ENCODE measurements at regions of chr14 and their contacts with region 1.

Region 1: GRCh38 chr14:34227834-34228649 is 234.0 kb downstream of the SPTSSA start:
- DNase-seq: peak; percentile 56 to 76
- ATAC-seq: peak; percentile 92 to 99 (median 95)
- H3K4me3 ChIP-seq: peak overlapping the region; percentile 52
- H3K27ac ChIP-seq: no peak overlapping the region
- H3K4me1 ChIP-seq: peaks cover 17% of the 10 kb centered on the region
- H3K27me3 ChIP-seq: no peaks in the 10 kb centered on the region
- CTCF ChIP-seq: peak; percentile 79

Region 2: GRCh38 chr14:33839193-33840076 is 388.6 kb before region 1 on chr14:
- intact Hi-C with region 1: loop called (anchors 2 kb)
- DNase-seq: peak; percentile 35 to 60
- ATAC-seq: peak; percentile 76 to 95 (median 85)
- H3K4me3 ChIP-seq: no peak overlapping the region
- H3K27ac ChIP-seq: no peak overlapping the region
- H3K4me1 ChIP-seq: peaks cover 9% of the 10 kb centered on the region
- H3K27me3 ChIP-seq: no peaks in the 10 kb centered on the region
- CTCF ChIP-seq: peak; percentile 91

Region 3: GRCh38 chr14:33950320-33951182 is 277.5 kb before region 1 on chr14 and contains the start of gene EGLN3:
- intact Hi-C with region 1: loop called in 1 of 2 experiments (anchors 10 kb)
- DNase-seq: peak; percentile 89 to 94
- ATAC-seq: peak; percentile 98 to 99 (median 99)
- H3K4me3 ChIP-seq: peak within 1 kb of the TSS; percentile 81
- H3K27ac ChIP-seq: peak within 1 kb of the TSS; percentile 86
- H3K4me1 ChIP-seq: peaks cover 22% of the 10 kb centered on the region
- H3K27me3 ChIP-seq: no peaks in the 10 kb centered on the region
- CTCF ChIP-seq: no peak
- total RNA-seq, gene EGLN3: 6.7 to 58.7 (median 20.6) TPM

Region 4: DNA sequence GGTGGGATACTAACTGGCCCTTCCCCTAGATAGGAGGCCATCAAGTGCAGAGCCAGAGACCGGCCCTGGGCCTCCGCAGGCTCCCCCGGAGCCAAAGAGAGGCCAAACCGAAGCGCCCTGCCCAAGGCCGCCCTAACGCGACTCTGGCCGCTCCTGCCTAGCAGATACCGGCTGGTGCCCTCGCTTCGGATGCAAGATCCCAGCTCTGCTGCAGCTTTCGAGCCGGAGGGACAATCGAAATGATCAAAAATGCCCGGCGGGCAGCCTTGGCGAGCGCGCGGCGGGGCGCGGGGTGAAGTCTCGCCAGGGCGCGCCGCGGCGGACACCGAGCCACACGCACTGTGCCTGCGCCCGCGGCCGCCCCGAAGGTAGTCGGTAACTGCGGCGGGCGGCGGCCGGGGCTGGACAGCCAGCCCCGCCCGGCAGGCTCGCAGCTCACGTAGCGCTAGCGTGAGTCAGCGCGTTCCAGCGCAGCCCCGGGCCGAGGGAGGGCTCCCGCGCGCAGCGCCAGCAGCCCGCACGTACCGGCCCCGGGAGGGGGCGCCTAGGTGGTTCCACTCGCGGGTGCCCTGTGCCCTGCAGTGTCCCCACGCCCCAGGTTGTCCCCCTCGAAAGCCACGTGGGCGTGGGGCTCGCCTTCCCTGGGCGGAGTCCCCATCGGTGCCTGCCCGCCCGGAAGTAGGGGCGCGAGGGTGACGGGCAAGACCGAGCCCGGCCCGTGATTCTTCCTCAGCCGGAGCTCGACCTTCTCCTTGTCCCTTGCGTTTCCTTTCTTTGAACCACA is 168.0 kb before region 1 on chr14:
- intact Hi-C with region 1: loop called in 1 of 2 experiments (anchors 10 kb)
- DNase-seq: peak; percentile 86 to 93
- ATAC-seq: peak; percentile 91 to 95 (median 92)
- H3K4me3 ChIP-seq: peak overlapping the region; percentile 82
- H3K27ac ChIP-seq: peak overlapping the region; percentile 99
- H3K4me1 ChIP-seq: peaks cover 31% of the 10 kb centered on the region
- H3K27me3 ChIP-seq: no peaks in the 10 kb centered on the region
- CTCF ChIP-seq: peak; percentile 38

Region 5: DNA sequence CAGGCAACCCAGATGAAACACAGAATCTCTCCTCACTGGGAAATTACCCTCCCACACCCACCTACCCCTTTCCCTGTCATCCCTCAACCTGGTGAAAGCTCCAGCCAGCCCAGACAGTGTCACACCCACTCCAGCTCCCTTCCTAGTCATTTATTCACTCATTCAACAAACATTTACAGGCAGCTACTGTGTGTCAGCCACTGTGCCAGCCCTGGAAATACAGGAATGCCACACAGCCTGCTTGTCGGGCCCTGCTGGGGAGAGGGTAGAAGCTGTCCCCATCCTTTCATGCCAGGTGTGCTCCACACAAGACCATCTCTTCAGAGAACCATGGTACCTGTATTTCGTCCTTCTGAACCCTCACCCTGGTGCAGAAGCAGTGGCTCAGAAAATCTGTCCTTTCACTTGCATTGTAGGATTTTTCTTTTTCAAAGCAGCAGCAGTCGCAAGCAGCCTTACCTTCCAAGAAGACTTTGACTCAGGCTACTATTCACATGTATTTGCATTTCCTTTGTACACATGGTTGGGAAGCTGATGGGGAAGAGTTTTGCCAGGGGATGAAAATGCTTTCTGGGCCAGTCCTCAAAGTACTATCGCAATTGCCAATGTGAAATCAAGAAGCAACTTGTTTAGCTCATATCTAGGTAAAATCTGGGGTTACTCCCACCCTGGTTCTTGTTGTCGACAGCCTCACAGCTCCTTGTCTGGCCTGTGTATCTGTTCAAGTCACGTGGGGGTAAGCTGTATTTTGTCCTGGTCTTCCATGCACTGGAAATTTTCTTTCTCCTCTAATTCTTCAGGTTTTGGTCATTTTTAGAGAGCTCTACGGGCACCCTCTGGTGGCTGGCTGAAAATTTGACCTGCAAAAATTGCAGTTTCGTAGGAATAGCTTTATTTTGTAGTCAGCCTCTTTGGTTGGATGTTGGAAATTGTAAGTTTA is 129.7 kb before region 1 on chr14:
- intact Hi-C with region 1: loop called in 1 of 2 experiments (anchors 5 kb)
- DNase-seq: peak; percentile 17 to 62
- ATAC-seq: peak in 3 of 4 donors; percentile 25 to 65 (median 56)
- H3K4me3 ChIP-seq: no peak overlapping the region
- H3K27ac ChIP-seq: no peak overlapping the region
- H3K4me1 ChIP-seq: no peaks in the 10 kb centered on the region
- H3K27me3 ChIP-seq: no peaks in the 10 kb centered on the region
- CTCF ChIP-seq: peak; percentile 56

Region 6: DNA sequence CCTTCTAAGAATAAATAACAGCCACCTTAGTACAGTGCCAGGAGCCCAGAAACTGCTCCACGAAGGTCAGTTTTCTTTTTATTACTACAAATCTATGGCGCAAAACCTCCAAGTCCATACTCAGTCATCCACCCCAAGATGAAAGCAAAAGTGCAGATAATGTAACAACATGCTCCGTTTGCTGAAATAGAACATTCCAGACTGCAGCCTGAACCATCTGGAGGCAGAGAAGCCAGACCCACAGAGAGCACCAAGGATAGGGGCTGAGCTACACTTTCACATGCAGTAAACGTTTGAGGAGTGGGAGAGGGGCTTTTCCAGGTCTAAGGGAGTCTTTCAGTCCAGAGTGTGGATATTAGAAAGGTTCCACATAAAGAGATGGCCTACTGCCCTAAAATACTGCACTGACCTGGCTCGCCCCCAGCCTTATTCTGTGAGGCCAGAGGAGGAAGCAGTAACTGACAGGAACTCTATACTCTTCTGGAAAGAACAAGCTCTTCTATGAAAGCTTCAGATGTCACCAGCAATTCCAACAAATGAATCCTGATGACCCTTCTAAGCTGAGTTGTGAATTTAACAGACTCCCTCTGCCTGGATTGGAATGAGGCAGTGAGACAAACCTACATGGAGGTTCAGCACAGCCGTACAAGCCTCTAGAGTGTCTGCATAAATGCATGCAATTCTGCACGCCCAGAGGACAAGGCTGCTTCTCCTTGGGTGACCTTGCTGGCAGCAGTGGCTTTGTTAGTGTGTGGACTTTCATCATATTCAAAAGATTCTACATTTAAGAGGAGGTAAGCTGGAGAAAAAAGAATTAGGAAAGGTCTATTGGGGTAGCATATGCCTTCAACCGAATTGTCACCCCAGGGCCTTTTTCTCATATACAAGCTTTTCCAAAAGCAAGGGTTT is 123.3 kb before region 1 on chr14:
- intact Hi-C with region 1: loop called (anchors 5 kb)
- DNase-seq: no peak
- ATAC-seq: peak; percentile 33 to 82 (median 67)
- H3K4me3 ChIP-seq: no peak overlapping the region
- H3K27ac ChIP-seq: no peak overlapping the region
- H3K4me1 ChIP-seq: peaks cover 16% of the 10 kb centered on the region
- H3K27me3 ChIP-seq: no peaks in the 10 kb centered on the region
- CTCF ChIP-seq: no peak

Region 7: GRCh38 chr14:34136996-34137745 is 90.9 kb before region 1 on chr14:
- intact Hi-C with region 1: loop called in 1 of 2 experiments (anchors 5 kb)
- DNase-seq: no peak
- ATAC-seq: no peak
- H3K4me3 ChIP-seq: no peak overlapping the region
- H3K27ac ChIP-seq: no peak overlapping the region
- H3K4me1 ChIP-seq: peaks cover 3% of the 10 kb centered on the region
- H3K27me3 ChIP-seq: no peaks in the 10 kb centered on the region
- CTCF ChIP-seq: no peak